Activated CD4-positive, alpha-beta memory T cell treated with anti-CD3 and anti-CD28 coated beads, Interleukin-2, amount 10 ng/mL, durations not matched to agents 7 days and 5 days (primary cell): ENCODE measurements at regions of chr19 and their contacts with region 1.

Region 1: GRCh38 chr19:43595999-43596841 is at the starts of genes IRGQ and ZNF576:
- DNase-seq: peak; percentile 100
- H3K4me3 Mint-ChIP-seq: peak within 1 kb of the TSS; percentile 97
- H3K27ac Mint-ChIP-seq: peak within 1 kb of the TSS; percentile 92
- H3K4me1 Mint-ChIP-seq: peaks cover 41% of the 10 kb centered on the region
- H3K27me3 Mint-ChIP-seq: no peaks in the 10 kb centered on the region
- total RNA-seq, gene IRGQ: 15.3 to 16.5 TPM
- total RNA-seq, gene ZNF576: 13.2 to 13.5 TPM

Region 2: GRCh38 chr19:43438291-43439096 is 157.7 kb before region 1 on chr19:
- CTCF ChIA-PET with region 1: interaction called, 22 read pairs
- POLR2A ChIA-PET with region 1: interaction called, 10 read pairs
- DNase-seq: peak; percentile 34
- H3K4me3 Mint-ChIP-seq: peak overlapping the region; percentile 37
- H3K27ac Mint-ChIP-seq: peak overlapping the region; percentile 97
- H3K4me1 Mint-ChIP-seq: peaks cover 41% of the 10 kb centered on the region
- H3K27me3 Mint-ChIP-seq: peaks cover 5% of the 10 kb centered on the region

Region 3: DNA sequence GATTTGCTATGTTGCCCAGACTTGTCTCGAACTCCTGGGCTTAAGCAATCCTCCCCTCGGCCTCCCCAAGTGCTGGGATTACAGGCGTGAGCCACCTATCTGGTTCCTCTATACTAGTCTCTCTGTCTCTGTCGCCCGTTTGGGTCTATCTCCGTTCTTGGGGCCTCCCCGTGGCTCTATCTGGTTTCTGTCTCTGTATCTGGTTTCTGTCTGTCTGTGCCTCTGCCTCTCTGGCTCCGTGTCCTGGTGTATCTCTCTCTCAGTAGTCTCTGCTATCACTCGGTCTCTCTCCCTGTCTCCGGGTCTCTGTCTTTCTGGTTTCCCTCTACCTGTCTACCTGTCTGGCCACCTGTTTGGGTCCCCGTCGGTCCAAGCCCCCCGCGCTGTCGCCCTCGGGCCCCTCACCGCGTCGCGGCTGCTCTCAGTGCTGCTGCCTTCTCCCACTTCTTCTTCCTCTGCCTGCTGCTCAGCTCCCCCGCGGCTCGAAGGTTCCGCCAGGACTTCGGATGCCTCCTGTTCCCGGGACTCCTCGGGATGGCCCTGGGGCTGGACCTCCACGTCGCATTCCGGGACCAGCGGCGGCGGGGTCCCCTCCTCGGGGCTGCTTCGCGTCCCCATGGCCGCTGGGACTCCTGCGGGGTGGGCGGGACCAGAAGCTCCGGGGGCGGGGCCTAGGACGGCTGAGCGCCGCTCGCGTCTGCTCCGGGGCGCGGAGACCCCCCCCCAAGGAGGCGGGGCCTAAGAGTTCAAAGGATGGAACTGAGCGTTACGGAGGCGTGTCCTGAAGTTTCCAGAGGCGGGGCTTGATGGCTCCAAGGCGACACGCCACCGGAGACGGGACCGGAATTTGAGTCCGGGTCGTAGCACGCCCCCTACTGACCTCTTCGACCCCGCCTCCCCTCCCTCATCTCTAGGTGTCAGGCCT is 92.5 kb before region 1 on chr19:
- CTCF ChIA-PET with region 1: interaction called, 6 read pairs
- POLR2A ChIA-PET with region 1: interaction called, 21 read pairs
- DNase-seq: peak; percentile 98
- H3K4me3 Mint-ChIP-seq: peak overlapping the region; percentile 96
- H3K27ac Mint-ChIP-seq: peak overlapping the region; percentile 97
- H3K4me1 Mint-ChIP-seq: peaks cover 32% of the 10 kb centered on the region
- H3K27me3 Mint-ChIP-seq: no peaks in the 10 kb centered on the region

Region 4: DNA sequence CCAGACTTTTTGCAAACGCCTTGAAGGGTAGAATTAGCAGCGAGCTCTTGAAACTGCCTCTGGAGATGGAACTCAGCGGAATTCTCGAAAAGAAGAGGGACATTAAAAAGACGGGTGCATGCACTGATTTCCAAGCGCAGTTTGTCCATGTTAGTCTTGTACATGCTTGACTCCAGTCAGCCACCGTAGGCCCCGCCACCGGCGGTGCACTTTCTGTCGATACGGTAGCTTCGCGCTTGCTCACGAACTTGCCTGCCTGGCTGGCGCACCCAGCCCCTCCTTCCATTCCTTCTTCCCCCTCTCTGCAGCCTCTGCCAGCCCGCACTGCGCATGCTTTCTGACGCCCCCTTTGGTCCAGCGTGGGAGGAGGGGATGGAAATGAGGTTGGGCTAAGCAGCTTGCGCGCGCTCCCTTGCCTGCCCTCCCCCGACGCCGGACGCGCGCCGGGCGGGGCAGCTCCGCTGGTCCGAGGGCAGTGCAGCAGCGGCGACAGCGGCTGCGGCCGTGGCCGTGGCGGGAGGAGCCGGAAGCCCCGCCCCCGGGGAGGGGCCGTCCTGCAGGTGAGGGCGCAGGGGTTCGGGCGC is 63.2 kb before region 1 on chr19 and contains the start of gene ZNF575:
- CTCF ChIA-PET with region 1: interaction called, 29 read pairs
- POLR2A ChIA-PET with region 1: interaction called, 27 read pairs
- DNase-seq: peak; percentile 89
- H3K4me3 Mint-ChIP-seq: peak within 1 kb of the TSS; percentile 86
- H3K27ac Mint-ChIP-seq: peak within 1 kb of the TSS; percentile 98
- H3K4me1 Mint-ChIP-seq: peaks cover 26% of the 10 kb centered on the region
- H3K27me3 Mint-ChIP-seq: no peaks in the 10 kb centered on the region
- total RNA-seq, gene ZNF575: 4.1 to 4.8 TPM

Region 5: DNA sequence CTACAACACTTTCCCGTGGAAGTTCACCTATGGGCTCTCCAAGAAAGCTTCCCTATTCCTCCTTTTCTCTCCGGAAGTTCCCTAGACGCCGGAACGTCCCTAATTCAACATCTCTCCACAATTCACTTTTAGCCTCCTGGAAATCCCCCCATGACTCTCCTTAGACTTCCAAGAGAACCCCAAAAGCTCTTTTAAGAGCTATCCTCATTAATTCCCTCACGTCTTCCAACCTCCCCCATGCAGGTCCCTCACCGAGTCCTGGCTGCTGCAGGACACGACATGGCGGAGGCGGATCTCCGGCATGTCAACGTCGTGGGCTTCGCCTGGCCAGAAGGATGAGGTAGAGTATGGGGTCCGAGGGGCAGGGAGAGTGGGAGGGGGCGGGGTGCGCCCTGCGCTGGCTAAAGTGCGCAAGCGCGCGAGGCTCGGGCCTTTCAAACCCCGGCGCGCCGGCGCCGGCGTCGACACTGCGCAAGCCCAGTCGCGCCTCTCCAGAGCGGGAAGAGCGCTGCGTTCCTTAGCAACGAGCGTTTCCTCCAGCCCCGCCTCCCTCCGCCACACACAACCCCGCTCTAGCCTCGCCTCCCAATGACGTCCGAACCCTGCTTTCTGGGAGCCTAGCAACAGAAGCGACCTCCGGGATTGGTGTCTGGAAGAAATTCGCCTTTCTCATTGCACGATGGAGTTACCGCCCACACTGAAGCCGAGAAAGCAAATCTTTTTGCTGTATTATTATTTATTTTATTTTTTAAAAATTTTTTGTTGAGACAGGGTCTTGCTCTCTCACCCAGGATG is 20.9 kb before region 1 on chr19 and contains the starts of genes PINLYP and XRCC1:
- CTCF ChIA-PET with region 1: interaction called, 95 read pairs
- POLR2A ChIA-PET with region 1: interaction called, 57 read pairs
- DNase-seq: peak; percentile 98
- H3K4me3 Mint-ChIP-seq: peak within 1 kb of the TSS; percentile 95
- H3K27ac Mint-ChIP-seq: peak within 1 kb of the TSS; percentile 87
- H3K4me1 Mint-ChIP-seq: peaks cover 43% of the 10 kb centered on the region
- H3K27me3 Mint-ChIP-seq: peaks cover 3% of the 10 kb centered on the region
- total RNA-seq, gene PINLYP: 3.7 to 4.4 TPM
- total RNA-seq, gene XRCC1: 42.5 to 46.1 TPM

Region 6: DNA sequence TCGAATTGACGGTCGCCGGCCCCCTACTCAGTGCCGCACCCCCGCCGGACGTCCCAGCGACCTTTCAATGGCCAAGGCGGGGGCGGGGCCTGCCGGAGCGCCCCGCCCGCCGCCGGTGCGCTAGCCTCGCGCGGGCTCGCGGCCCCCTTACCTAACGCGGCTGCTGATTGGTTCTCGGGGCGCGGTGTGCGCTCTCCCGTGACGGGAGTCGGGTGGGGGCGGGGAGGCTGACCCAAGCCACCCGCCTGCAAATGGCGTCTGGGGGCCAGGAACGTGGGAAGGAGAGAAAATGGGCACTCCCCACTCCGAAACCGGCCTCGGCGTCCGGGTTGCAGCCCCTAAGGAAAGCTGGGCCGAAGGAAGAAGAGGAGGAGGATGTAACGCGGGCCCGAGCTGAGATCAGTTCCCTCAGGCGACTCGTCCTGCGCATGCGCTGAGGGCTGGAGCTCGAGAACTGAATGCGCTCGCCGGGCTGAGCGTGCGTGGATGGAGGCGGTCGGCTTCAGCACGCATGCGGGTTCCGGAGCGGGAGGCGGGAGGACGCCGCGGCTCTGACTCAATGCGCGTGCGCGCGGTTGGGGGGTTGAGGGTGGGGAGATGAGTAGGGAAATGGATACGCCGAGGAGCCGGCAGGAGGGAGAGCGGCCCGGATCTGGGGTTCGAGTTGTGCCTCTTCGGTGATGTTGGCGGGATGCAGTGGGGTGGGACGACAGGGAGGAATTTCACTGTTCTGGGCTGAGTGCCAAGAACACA is 158.5 kb after region 1 on chr19 and contains the start of gene SMG9:
- CTCF ChIA-PET with region 1: no interaction called
- POLR2A ChIA-PET with region 1: interaction called, 15 read pairs
- DNase-seq: peak; percentile 98
- H3K4me3 Mint-ChIP-seq: peak within 1 kb of the TSS; percentile 97
- H3K27ac Mint-ChIP-seq: peak within 1 kb of the TSS; percentile 99
- H3K4me1 Mint-ChIP-seq: peaks cover 67% of the 10 kb centered on the region
- H3K27me3 Mint-ChIP-seq: no peaks in the 10 kb centered on the region
- total RNA-seq, gene SMG9: 58.1 to 64.6 TPM